ENCODE measurements at regions of chr10 and their contacts with region 1.

Region 1: GRCh38 chr10:28640551-28640950 is 36.8 kb upstream of the BAMBI start:
- DNase-seq: no peak
- ATAC-seq: no peak
- H3K4me3 ChIP-seq: no peak overlapping the region
- H3K27ac ChIP-seq: no peak overlapping the region
- H3K4me1 ChIP-seq: no peaks in the 10 kb centered on the region
- H3K27me3 ChIP-seq: peaks cover 18% of the 10 kb centered on the region
- CTCF ChIP-seq: no peak
- POLR2A ChIP-seq: no peak
- RAD21 ChIP-seq: no peak

Region 2: DNA sequence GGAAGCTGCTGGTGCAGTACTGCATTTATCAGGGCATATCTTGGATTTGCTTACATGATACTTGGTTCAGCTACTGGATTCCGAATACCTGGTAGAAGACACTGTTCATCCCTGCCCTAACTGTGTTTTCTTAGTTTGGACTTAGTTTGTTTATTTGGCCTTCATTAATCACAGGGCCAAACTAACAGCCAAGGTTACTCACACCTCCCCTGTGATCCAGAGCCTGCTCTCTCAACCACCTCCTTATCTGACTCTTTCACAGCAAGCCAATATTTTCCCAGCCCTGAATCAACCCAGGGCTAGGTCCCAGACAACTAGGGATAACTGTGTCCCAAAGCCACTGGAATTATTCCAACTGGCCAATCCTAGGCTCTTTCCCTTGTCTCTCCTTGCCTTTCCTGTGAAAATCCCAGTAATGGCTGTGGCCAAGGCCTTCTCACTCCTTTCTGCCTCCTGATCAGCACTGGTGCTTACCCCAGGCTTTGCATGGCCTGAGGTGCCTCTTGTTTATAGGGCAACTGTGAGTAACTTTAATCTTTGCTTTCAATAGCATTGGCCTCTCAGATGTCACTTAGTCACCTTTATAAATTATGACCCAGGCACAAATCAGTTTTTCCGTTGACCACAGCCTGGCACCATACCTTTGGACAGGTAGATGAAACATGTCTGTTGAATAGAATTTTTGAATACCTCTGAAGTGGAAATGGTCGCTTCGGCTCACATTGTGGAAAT is 1428.1 kb after region 1 on chr10:
- CTCF ChIA-PET with region 1: no interaction called
- POLR2A ChIA-PET with region 1: interaction called, 25 read pairs
- dilution Hi-C with region 1: no loop called
- in situ Hi-C with region 1: no loop called
- intact Hi-C with region 1: no loop called
- DNase-seq: no peak
- ATAC-seq: peak; percentile 44; the same call in 1 of the 2 replicates
- H3K4me3 ChIP-seq: no peak overlapping the region
- H3K27ac ChIP-seq: no peak overlapping the region
- H3K4me1 ChIP-seq: peaks cover 6% of the 10 kb centered on the region
- H3K27me3 ChIP-seq: no peaks in the 10 kb centered on the region
- CTCF ChIP-seq: no peak
- POLR2A ChIP-seq: no peak
- RAD21 ChIP-seq: no peak

Measured in IMR-90 (cell line).